Panc1 (cell line): ENCODE measurements at regions of chr4 and their contacts with region 1.

Region 1: GRCh38 chr4:38675146-38676121 is 11.4 kb downstream of the KLF3 start:
- DNase-seq: peak; percentile 60
- ATAC-seq: peak; percentile 68; the same call in 1 of the 2 replicates
- H3K4me3 ChIP-seq: no peak overlapping the region
- H3K27ac ChIP-seq: peak overlapping the region; percentile 51
- H3K4me1 ChIP-seq: peaks cover 45% of the 10 kb centered on the region
- H3K27me3 ChIP-seq: no peaks in the 10 kb centered on the region
- CTCF ChIP-seq: peak; percentile 82

Region 2: DNA sequence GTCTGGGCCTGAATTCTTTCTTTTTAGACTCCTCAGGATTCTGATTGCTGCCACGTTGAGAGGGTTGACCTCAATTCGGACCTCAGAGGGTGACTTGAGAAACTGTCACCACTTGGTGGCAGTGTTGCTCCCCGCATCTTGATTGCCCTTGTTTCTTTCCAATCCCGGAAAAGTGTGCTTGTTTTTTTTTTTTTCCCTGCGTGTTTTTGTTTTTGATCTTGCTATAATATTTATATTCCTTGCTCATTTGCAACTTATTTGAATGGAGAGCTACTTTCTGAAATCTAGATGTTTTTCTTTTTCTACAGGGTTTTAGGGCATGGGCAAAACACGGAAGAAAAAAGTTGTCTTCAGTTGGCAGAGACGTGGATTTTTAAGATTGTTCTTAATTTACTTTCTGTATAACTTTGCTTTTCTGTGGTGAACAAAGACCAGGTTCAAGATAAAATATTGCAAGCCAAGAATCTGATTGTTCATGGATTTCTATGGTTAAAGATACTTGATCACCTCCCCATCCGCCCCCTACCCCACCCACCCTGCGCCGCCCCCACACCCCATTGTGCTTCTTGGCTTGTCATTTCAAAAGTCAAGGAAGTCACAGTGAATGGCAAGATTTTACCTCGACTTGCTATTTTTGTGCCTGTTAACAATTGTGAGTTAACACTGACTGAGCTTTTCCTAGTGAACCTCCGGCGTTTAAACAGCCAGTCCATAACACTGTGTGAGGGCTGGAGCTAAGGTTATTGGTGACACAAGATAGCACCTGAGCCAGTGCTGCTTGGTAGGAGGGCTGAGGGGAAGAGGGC is 613.1 kb before region 1 on chr4:
- CTCF ChIA-PET with region 1: no interaction called
- POLR2A ChIA-PET with region 1: no interaction called
- in situ Hi-C with region 1: no loop called
- intact Hi-C with region 1: loop called (anchors 10 kb)
- DNase-seq: peak; percentile 41
- ATAC-seq: peak; percentile 82; the same call in 1 of the 2 replicates
- H3K4me3 ChIP-seq: no peak overlapping the region
- H3K27ac ChIP-seq: no peak overlapping the region
- H3K4me1 ChIP-seq: no peaks in the 10 kb centered on the region
- H3K27me3 ChIP-seq: no peaks in the 10 kb centered on the region
- CTCF ChIP-seq: peak; percentile 84

Region 3: GRCh38 chr4:38179690-38180377 is 495.6 kb before region 1 on chr4:
- CTCF ChIA-PET with region 1: interaction called, 8 read pairs
- POLR2A ChIA-PET with region 1: no interaction called
- in situ Hi-C with region 1: no loop called
- intact Hi-C with region 1: loop called (anchors 2 kb)
- DNase-seq: no peak
- ATAC-seq: peak; percentile 90
- H3K4me3 ChIP-seq: no peak overlapping the region
- H3K27ac ChIP-seq: no peak overlapping the region
- H3K4me1 ChIP-seq: no peaks in the 10 kb centered on the region
- H3K27me3 ChIP-seq: no peaks in the 10 kb centered on the region
- CTCF ChIP-seq: peak; percentile 86

Region 4: GRCh38 chr4:38319456-38320342 is 355.7 kb before region 1 on chr4:
- CTCF ChIA-PET with region 1: interaction called, 6 read pairs
- POLR2A ChIA-PET with region 1: no interaction called
- in situ Hi-C with region 1: no loop called
- intact Hi-C with region 1: loop called (anchors 5 kb)
- DNase-seq: peak; percentile 77
- ATAC-seq: peak; percentile 85
- H3K4me3 ChIP-seq: peak overlapping the region in 1 of 2 experiments; percentile 35; a peak in 2 of 4 replicates
- H3K27ac ChIP-seq: peak overlapping the region; percentile 73
- H3K4me1 ChIP-seq: peaks cover 4% of the 10 kb centered on the region
- H3K27me3 ChIP-seq: no peaks in the 10 kb centered on the region
- CTCF ChIP-seq: peak; percentile 93

Region 5: GRCh38 chr4:38730830-38731646 is 55.6 kb after region 1 on chr4:
- CTCF ChIA-PET with region 1: no interaction called
- POLR2A ChIA-PET with region 1: no interaction called
- in situ Hi-C with region 1: no loop called
- intact Hi-C with region 1: loop called (anchors 2 kb)
- DNase-seq: peak; percentile 32
- ATAC-seq: peak; percentile 94
- H3K4me3 ChIP-seq: no peak overlapping the region
- H3K27ac ChIP-seq: no peak overlapping the region
- H3K4me1 ChIP-seq: peaks cover 3% of the 10 kb centered on the region; the same call in 1 of the 2 replicates
- H3K27me3 ChIP-seq: no peaks in the 10 kb centered on the region
- CTCF ChIP-seq: peak; percentile 89

Region 6: GRCh38 chr4:39054497-39054896 is 379.1 kb after region 1 on chr4:
- CTCF ChIA-PET with region 1: no interaction called
- POLR2A ChIA-PET with region 1: no interaction called
- in situ Hi-C with region 1: no loop called
- intact Hi-C with region 1: no loop called
- DNase-seq: no peak
- ATAC-seq: peak; percentile 70
- H3K4me3 ChIP-seq: no peak overlapping the region
- H3K27ac ChIP-seq: peak overlapping the region; percentile 63; the same call in 1 of the 2 replicates
- H3K4me1 ChIP-seq: peaks cover 50% of the 10 kb centered on the region
- H3K27me3 ChIP-seq: no peaks in the 10 kb centered on the region
- CTCF ChIP-seq: no peak